ENCODE measurements at regions of chr20 and their contacts with region 1.

Region 1: GRCh38 chr20:4607287-4607713 is 114.4 kb upstream of the PRND start:
- DNase-seq: peak in 1 of 3 donors; percentile 52
- ATAC-seq: peak; percentile 70 to 79
- H3K4me3 ChIP-seq: no peak overlapping the region
- H3K27ac ChIP-seq: no peak overlapping the region
- H3K4me1 ChIP-seq: peaks cover 1% of the 10 kb centered on the region
- H3K27me3 ChIP-seq: no peaks in the 10 kb centered on the region

Region 2: DNA sequence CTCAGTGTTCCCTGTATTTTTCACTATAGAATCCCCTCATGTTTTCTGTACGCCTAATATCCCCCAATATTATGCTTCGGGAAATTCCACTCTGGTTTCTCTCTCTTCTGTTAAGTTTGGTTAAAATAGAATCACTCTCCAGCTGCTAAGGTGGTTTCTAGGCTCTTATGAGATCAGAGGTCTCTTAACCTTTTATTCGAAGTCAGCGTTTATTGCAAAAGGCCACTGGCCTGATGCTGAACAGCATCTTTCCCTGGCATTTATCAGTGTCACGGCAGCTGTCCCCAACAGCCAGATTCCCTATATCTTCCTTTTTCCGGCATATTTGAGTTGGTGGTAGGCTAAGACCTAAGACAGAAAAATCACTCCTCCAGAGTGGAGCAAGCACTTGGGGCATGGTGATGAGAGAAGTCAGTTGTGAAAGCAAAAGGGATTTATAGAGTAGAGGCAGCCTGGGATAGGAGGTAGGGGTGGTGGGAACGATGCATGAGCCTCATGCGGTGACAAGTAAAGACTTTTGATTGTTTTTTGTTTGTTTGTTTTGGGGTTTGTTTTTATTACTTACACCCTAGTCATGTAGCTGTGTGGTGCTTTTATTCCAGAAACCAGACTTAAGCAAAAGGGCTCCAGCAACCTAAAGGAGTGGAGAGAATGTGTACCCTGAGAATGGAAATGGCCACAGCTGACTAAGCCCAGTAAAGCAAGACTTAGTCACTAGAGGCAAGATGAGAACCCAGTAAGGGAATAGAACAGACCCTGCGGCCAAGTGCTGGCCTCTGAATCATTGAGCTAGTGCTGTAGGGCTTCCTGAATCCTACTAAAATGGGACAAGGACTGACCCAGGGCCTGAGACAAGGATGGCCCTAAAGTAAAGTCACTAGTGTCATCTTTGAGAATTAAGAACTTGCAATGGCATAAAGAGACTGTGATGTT is 118.6 kb before region 1 on chr20:
- intact Hi-C with region 1: no loop called
- DNase-seq: no peak
- ATAC-seq: no peak
- H3K4me3 ChIP-seq: no peak overlapping the region
- H3K27ac ChIP-seq: no peak overlapping the region
- H3K4me1 ChIP-seq: no peaks in the 10 kb centered on the region
- H3K27me3 ChIP-seq: no peaks in the 10 kb centered on the region

Region 3: DNA sequence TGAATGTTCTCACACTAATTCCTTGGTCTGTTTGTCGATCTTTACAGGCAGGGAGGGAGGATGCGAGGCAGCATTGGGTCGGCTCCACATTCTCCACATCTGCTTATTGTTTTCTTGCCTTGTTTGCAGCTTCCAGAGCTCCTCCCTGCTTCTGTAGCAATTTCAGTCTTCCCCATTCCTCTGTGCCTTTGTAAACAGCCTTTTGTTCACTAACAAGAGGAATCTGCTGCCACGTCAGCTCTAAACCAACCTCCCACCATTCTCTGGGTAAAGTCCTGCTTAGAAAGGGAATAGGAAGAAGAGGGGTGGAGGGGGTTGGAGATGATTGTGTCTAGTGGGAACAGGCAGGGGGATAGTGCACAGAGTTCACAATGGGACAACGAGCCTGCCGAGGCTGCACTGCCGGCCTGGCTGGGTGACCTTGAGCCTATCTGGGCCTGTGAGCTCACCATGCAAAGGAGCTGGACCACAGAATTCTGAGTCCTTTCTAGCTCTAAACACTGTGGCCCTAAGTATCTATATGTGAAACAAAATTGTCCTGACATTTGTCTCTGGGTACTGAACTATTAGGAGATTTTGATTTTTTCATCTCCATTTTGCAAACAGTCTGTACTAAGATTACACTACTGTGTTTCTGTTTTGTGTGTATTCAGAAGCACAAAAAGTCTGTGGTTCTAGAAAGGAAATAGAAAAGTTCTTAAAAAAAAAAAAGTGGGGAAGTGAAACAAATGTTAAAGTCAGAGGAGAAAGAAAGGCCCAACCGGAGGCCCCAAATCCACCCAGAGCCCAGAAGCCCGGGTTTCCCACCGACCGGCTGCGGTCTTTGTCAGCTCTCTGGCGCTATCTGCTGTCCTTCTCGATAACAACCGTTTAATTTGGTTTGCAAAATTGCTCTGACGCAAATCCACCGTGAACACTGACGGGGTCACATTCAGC is 113.0 kb after region 1 on chr20:
- intact Hi-C with region 1: loop called (anchors 1 to 2 kb)
- DNase-seq: peak; percentile 73 to 89 (median 84)
- ATAC-seq: peak; percentile 84 to 86
- H3K4me3 ChIP-seq: no peak overlapping the region
- H3K27ac ChIP-seq: peak overlapping the region; percentile 25
- H3K4me1 ChIP-seq: no peaks in the 10 kb centered on the region
- H3K27me3 ChIP-seq: no peaks in the 10 kb centered on the region

Region 4: GRCh38 chr20:4949833-4950178 is 342.5 kb after region 1 on chr20:
- intact Hi-C with region 1: loop called in 1 of 4 experiments (anchors 10 kb)
- DNase-seq: no peak
- ATAC-seq: peak; percentile 56 to 68
- H3K4me3 ChIP-seq: no peak overlapping the region
- H3K27ac ChIP-seq: no peak overlapping the region
- H3K4me1 ChIP-seq: peaks cover 4% of the 10 kb centered on the region
- H3K27me3 ChIP-seq: no peaks in the 10 kb centered on the region

Measured in right cardiac atrium (tissue), 5 donors.